Endothelial cell of umbilical vein (primary cell): ENCODE measurements at regions of chr9 and their contacts with region 1.

Region 1: DNA sequence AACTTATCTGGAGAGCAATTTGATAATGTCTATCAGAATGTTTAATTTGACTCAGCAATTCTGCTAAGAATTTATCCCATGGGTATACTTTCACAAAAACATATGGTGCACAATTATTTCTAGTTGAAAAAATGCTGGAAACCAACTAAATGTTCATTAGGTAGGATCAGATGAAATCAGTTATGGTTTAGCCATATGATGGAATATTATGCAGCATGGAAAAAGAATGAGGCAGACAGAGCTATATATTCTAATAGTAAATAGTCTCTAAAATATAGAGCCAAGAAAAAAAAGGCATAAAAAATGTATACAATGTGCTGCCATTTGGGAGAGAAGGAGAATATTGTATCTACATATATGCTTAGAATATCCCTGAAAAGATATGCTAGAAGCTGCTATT is 3.6 kb upstream of the SPATA6L start:
- DNase-seq: no peak
- H3K4me3 ChIP-seq: no peak overlapping the region
- H3K27ac ChIP-seq: no peak overlapping the region
- H3K4me1 ChIP-seq: peaks cover 11% of the 10 kb centered on the region
- H3K27me3 ChIP-seq: peaks cover 0 to 4% of the 10 kb centered on the region in 2 experiments
- CTCF ChIP-seq: no peak
- POLR2A ChIP-seq: no peak

Region 2: GRCh38 chr9:4713849-4714248 is 44.0 kb after region 1 on chr9:
- CTCF ChIA-PET with region 1: no interaction called
- POLR2A ChIA-PET with region 1: interaction called, 11 read pairs
- dilution Hi-C with region 1: no loop called
- intact Hi-C with region 1: no loop called
- DNase-seq: peak; percentile 13
- H3K4me3 ChIP-seq: no peak overlapping the region
- H3K27ac ChIP-seq: no peak overlapping the region
- H3K4me1 ChIP-seq: no peaks in the 10 kb centered on the region
- H3K27me3 ChIP-seq: no peaks in the 10 kb centered on the region
- CTCF ChIP-seq: no peak
- POLR2A ChIP-seq: no peak